CD4-positive, alpha-beta memory T cell (primary cell): ENCODE measurements at regions of chr12 and their contacts with region 1.

Region 1: GRCh38 chr12:13362260-13362841 is 165.8 kb downstream of the EMP1 start:
- DNase-seq: peak in 4 of 5 donors; percentile 5 to 26 (median 14)
- H3K4me3 ChIP-seq: no peak overlapping the region
- H3K4me3 Mint-ChIP-seq: no peak overlapping the region
- H3K27ac ChIP-seq: no peak overlapping the region
- H3K27ac Mint-ChIP-seq: no peak overlapping the region
- H3K4me1 ChIP-seq: no peaks in the 10 kb centered on the region
- H3K4me1 Mint-ChIP-seq: no peaks in the 10 kb centered on the region
- H3K27me3 ChIP-seq: no peaks in the 10 kb centered on the region
- H3K27me3 Mint-ChIP-seq: peaks cover 9 to 15% of the 10 kb centered on the region in 2 donors

Region 2: DNA sequence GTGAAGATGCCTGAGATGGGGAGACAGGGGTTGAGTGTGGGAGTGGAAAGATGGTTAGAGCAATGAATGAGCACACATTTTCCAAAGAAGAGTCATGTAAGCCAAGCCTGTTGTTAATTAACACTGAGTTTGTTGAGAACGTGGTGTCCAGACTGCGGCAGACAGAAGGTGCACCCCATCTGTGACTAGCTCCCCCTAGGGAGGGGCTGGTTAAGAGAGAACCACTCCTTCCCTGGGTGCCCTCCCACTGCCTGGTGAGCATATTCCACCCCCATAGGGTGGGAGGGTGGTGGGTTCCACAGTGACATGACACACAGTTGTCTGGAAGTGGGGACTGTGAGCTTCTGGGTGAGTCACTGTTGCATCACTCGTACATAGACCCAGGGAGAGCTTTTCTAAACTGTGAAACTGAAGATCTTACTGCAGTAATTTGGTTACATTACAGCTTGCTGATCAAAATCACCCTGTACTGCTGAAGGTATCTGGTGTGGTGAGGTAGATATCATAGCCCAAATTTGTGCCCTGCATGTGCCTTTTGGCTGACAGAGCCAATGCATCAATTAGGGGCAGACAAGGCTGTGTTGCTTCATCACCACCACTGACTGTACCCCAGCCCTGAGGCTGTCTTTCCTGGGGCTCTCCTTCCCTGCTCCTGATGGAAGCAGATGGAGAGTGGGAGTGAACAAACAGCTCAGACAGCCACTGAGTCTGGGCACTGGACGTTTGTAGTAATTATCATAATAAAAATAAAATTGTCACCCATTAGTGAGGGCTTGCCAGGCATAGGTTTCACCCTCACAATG is 14.9 kb before region 1 on chr12:
- CTCF ChIA-PET with region 1: interaction called, 10 read pairs
- POLR2A ChIA-PET with region 1: no interaction called
- intact Hi-C with region 1: no loop called
- DNase-seq: no peak
- H3K4me3 ChIP-seq: no peak overlapping the region
- H3K4me3 Mint-ChIP-seq: no peak overlapping the region
- H3K27ac ChIP-seq: no peak overlapping the region
- H3K27ac Mint-ChIP-seq: no peak overlapping the region
- H3K4me1 ChIP-seq: no peaks in the 10 kb centered on the region
- H3K4me1 Mint-ChIP-seq: no peaks in the 10 kb centered on the region
- H3K27me3 ChIP-seq: no peaks in the 10 kb centered on the region
- H3K27me3 Mint-ChIP-seq: peaks cover 18 to 31% of the 10 kb centered on the region in 2 donors

Region 3: GRCh38 chr12:13376627-13377373 is 14.4 kb after region 1 on chr12:
- CTCF ChIA-PET with region 1: interaction called, 22 read pairs
- POLR2A ChIA-PET with region 1: no interaction called
- intact Hi-C with region 1: no loop called
- DNase-seq: no peak
- H3K4me3 ChIP-seq: no peak overlapping the region
- H3K4me3 Mint-ChIP-seq: no peak overlapping the region
- H3K27ac ChIP-seq: no peak overlapping the region
- H3K27ac Mint-ChIP-seq: no peak overlapping the region
- H3K4me1 ChIP-seq: no peaks in the 10 kb centered on the region
- H3K4me1 Mint-ChIP-seq: no peaks in the 10 kb centered on the region
- H3K27me3 ChIP-seq: no peaks in the 10 kb centered on the region
- H3K27me3 Mint-ChIP-seq: peaks cover 0 to 6% of the 10 kb centered on the region in 2 donors

Region 4: DNA sequence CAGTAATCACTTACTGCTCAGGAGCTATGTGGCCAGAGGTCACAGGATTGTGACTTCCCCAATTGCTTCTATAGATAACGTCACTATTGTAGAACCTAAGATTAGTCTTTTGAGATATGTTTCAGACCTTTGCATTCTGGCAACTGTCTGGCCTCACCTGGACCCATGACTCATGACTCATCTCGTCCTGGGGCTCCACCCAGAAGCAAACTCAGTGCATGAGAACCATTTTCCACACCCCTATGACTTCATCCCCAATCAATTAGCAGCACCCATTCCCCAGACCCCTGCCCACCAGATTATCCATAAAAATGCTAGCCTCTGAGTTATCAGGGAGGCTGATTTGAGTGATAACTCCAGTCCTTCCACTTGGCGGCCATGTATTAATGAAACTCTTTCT is 21.0 kb after region 1 on chr12:
- CTCF ChIA-PET with region 1: interaction called, 12 read pairs
- POLR2A ChIA-PET with region 1: no interaction called
- intact Hi-C with region 1: no loop called
- DNase-seq: no peak
- H3K4me3 ChIP-seq: no peak overlapping the region
- H3K4me3 Mint-ChIP-seq: no peak overlapping the region
- H3K27ac ChIP-seq: no peak overlapping the region
- H3K27ac Mint-ChIP-seq: no peak overlapping the region
- H3K4me1 ChIP-seq: no peaks in the 10 kb centered on the region
- H3K4me1 Mint-ChIP-seq: no peaks in the 10 kb centered on the region
- H3K27me3 ChIP-seq: no peaks in the 10 kb centered on the region
- H3K27me3 Mint-ChIP-seq: peaks cover 6% of the 10 kb centered on the region in 2 donors